MCF 10A (cell line): ENCODE measurements at regions of chr5 and their contacts with region 1.

Region 1: GRCh38 chr5:39217365-39218281 is 1.7 kb downstream of the FYB1 start:
- DNase-seq: peak; percentile 83
- H3K4me3 Mint-ChIP-seq: no peak overlapping the region
- H3K27ac Mint-ChIP-seq: no peak overlapping the region
- H3K4me1 Mint-ChIP-seq: peaks cover 22% of the 10 kb centered on the region
- H3K27me3 Mint-ChIP-seq: no peaks in the 10 kb centered on the region
- CTCF ChIP-seq: peak; percentile 89

Region 2: DNA sequence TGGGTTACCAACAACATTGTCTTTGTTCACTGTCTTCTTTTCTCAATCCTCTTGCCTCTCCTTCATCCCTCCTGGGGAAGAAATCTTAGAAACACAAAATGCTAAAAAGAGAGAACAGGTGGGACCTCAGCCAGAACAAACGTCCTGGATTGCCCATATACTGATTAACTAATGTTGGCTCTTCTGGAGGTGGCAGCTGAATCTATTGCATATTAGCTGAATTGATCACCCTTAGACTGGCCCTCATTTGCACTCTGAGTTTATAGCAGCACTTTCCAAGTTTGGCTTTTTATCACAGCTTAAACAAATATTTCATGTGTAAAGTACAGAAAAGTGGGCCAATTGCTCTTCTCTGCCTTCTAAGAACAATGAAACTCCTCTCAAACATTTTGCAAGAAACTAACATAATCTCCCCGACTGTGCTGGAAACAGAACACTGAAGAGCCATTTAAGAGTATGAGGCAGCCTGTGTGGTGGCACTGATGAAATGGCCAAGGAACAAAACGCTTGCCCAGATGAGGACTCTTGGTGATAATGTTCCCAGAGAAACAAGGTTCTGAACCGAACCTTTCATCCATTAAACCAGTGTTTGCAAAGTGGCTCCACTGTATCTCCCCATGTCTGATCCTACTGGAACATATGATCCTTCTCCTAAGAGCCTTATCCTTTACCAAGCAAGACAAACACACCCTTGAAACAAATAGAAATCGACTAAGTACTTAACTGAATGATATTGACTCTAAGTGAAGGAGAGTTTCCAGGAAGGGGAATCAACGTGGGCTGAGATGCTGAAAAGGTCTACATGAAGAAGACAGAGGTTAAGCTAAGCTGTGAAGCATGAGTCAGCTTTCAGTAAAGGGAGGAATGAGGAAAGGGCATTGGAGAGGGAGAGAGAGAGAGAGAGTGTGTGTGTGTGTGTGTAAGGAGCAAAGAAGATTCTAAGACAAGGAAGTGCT is 578.0 kb before region 1 on chr5:
- CTCF ChIA-PET with region 1: no interaction called
- POLR2A ChIA-PET with region 1: no interaction called
- intact Hi-C with region 1: no loop called
- DNase-seq: peak; percentile 5
- H3K4me3 Mint-ChIP-seq: no peak overlapping the region
- H3K27ac Mint-ChIP-seq: no peak overlapping the region
- H3K4me1 Mint-ChIP-seq: peaks cover 4% of the 10 kb centered on the region
- H3K27me3 Mint-ChIP-seq: peaks cover 22% of the 10 kb centered on the region
- CTCF ChIP-seq: no peak

Region 3: GRCh38 chr5:39005566-39006232 is 211.9 kb before region 1 on chr5:
- CTCF ChIA-PET with region 1: interaction called, 3 read pairs
- POLR2A ChIA-PET with region 1: no interaction called
- intact Hi-C with region 1: loop called (anchors 5 kb)
- DNase-seq: peak; percentile 37
- H3K4me3 Mint-ChIP-seq: no peak overlapping the region
- H3K27ac Mint-ChIP-seq: no peak overlapping the region
- H3K4me1 Mint-ChIP-seq: peaks cover 8% of the 10 kb centered on the region
- H3K27me3 Mint-ChIP-seq: no peaks in the 10 kb centered on the region
- CTCF ChIP-seq: peak; percentile 41

Region 4: DNA sequence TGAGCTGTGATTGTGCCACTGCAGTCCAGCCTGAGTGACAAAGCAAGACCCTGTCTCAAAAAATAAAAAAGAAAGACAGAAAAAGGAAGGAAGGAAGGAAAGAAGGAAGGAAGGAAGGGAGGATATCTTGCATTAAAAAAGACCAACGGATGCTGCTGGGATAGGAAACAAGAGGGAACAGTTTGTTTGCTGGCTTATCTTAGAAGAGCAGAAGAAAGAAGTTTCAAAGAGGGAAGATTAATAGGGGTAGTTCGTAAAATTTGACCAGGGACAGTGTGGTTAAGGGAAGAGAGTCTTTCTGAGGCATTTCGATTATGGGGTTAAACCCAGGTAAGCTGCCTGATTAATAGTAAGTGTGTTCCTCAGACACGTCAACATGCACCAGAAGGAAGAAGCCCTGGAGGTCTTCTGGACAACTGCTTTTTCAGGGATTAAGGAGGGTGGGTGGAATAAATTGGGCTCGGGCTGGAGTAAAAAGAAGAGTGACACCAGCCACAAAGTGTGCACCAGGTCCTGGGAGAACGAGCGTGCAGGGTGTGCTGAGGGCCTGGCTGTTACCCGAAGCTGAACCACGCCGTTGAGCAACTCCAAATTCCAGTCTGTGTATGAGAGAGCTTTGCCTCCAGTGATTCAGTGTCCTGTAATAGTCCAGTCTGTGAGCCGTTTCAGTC is 23.0 kb before region 1 on chr5:
- CTCF ChIA-PET with region 1: interaction called, 20 read pairs
- POLR2A ChIA-PET with region 1: interaction called, 4 read pairs
- intact Hi-C with region 1: no loop called
- DNase-seq: peak; percentile 91
- H3K4me3 Mint-ChIP-seq: no peak overlapping the region
- H3K27ac Mint-ChIP-seq: peak overlapping the region; percentile 26
- H3K4me1 Mint-ChIP-seq: peaks cover 31% of the 10 kb centered on the region
- H3K27me3 Mint-ChIP-seq: no peaks in the 10 kb centered on the region
- CTCF ChIP-seq: no peak

Region 5: DNA sequence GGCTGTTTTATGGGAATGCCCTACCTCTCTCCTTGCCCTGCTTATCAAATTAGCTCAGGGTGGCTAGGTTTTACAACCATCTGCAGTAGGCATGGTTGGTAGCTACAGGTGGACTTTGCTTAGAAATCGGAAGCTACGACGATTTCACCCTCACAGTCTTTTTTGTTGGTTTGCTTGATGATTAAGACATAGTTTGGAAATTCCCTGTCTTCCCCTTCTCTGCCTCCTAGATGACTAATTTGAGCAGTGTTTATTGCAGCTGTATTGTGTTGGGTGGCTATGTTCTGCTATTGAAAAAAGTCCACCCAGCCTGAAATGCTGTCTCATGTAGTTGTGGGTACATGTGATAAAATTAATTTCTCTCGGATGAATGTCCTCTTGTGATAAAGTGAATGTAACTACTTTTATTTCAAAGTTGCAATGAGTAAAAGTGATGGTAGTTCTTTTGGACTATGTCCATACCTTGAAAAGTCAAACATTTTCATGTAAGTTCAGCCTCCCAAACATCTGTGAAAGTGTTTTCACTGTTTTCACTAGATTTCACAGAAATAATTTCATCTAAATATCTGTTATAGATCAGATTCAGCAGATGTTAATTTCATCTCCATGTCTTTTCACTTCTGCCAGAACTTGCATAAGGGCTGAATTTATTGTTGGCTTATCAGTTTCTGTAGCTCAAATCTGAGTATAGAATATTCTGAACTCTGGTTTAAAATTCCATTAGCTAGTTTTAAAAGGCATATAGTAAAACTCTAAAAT is 39.0 kb after region 1 on chr5:
- CTCF ChIA-PET with region 1: interaction called, 10 read pairs
- POLR2A ChIA-PET with region 1: interaction called, 5 read pairs
- intact Hi-C with region 1: no loop called
- DNase-seq: peak; percentile 86
- H3K4me3 Mint-ChIP-seq: peak overlapping the region; percentile 57
- H3K27ac Mint-ChIP-seq: peak overlapping the region; percentile 90
- H3K4me1 Mint-ChIP-seq: peaks cover 23% of the 10 kb centered on the region
- H3K27me3 Mint-ChIP-seq: no peaks in the 10 kb centered on the region
- CTCF ChIP-seq: no peak

Region 6: GRCh38 chr5:39376293-39376714 is 158.7 kb after region 1 on chr5:
- CTCF ChIA-PET with region 1: interaction called, 25 read pairs
- POLR2A ChIA-PET with region 1: no interaction called
- intact Hi-C with region 1: loop called (anchors 10 kb)
- DNase-seq: peak; percentile 76
- H3K4me3 Mint-ChIP-seq: no peak overlapping the region
- H3K27ac Mint-ChIP-seq: no peak overlapping the region
- H3K4me1 Mint-ChIP-seq: no peaks in the 10 kb centered on the region
- H3K27me3 Mint-ChIP-seq: no peaks in the 10 kb centered on the region
- CTCF ChIP-seq: peak; percentile 70